HCT116 (cell line): ENCODE measurements at regions of chr12 and their contacts with region 1.

Region 1: DNA sequence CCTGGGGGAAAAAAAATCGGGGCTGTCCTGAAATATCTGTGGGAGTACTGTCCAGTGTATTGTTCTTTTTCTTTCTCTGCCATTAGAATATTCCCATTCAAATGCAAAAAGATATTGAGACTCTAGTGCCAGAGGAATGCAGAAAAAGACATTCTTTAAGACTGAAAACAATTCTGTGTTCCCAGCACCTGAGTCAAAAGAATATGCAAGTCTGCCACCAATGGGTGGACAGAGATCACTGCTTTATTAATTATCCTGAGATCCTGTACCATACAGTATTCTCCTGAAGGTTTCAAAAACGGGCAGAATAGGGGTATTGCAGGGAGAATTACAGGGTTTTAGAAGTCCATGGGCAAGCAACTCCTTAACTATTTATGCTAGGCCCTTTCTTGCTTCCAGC is 361.8 kb downstream of the C12orf50 start:
- DNase-seq: no peak
- ATAC-seq: peak; percentile 63
- H3K4me3 ChIP-seq: no peak overlapping the region
- H3K27ac ChIP-seq: no peak overlapping the region
- H3K4me1 ChIP-seq: no peaks in the 10 kb centered on the region
- H3K27me3 ChIP-seq: no peaks in the 10 kb centered on the region
- CTCF ChIP-seq: peak; percentile 22 to 34 (median 33); a peak in 4 of 6 replicates
- POLR2A ChIP-seq: no peak
- RAD21 ChIP-seq: peak; percentile 62

Region 2: GRCh38 chr12:87054226-87054625 is 613.2 kb before region 1 on chr12:
- CTCF ChIA-PET with region 1: no interaction called
- POLR2A ChIA-PET with region 1: no interaction called
- RAD21 ChIA-PET with region 1: no interaction called
- intact Hi-C with region 1: no loop called
- DNase-seq: no peak
- ATAC-seq: no peak
- H3K4me3 ChIP-seq: no peak overlapping the region
- H3K27ac ChIP-seq: no peak overlapping the region
- H3K4me1 ChIP-seq: no peaks in the 10 kb centered on the region
- H3K27me3 ChIP-seq: no peaks in the 10 kb centered on the region
- CTCF ChIP-seq: no peak
- POLR2A ChIP-seq: no peak
- RAD21 ChIP-seq: no peak

Region 3: DNA sequence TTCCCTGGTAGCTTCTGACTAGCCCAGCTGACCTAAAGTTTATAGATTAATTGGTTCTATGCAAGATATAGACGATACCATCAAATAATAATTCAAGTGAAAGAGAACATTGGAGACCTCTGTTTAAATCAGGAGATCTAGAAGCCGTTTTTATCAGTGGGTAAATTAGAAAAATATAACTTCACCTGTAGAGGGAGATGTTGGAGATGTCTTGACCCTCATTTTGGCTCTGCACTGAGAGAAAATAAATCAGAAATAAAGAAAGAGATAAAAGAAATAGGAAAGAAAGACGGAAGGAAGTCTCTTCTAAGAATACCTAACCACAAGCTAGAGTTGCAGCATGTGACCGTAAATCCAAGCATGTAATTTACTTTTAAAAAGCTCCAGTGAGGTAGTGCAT is 322.7 kb before region 1 on chr12:
- CTCF ChIA-PET with region 1: no interaction called
- POLR2A ChIA-PET with region 1: no interaction called
- RAD21 ChIA-PET with region 1: no interaction called
- intact Hi-C with region 1: loop called (anchors 10 kb)
- DNase-seq: no peak
- ATAC-seq: peak; percentile 38; the same call in 1 of the 2 replicates
- H3K4me3 ChIP-seq: no peak overlapping the region
- H3K27ac ChIP-seq: no peak overlapping the region
- H3K4me1 ChIP-seq: no peaks in the 10 kb centered on the region
- H3K27me3 ChIP-seq: no peaks in the 10 kb centered on the region
- CTCF ChIP-seq: peak; percentile 27 to 50 (median 37); a peak in 4 of 6 replicates
- POLR2A ChIP-seq: no peak
- RAD21 ChIP-seq: peak; percentile 64

Region 4: GRCh38 chr12:88141770-88142609 is 474.6 kb after region 1 on chr12 and contains the starts of genes CEP290 and TMTC3:
- CTCF ChIA-PET with region 1: no interaction called
- POLR2A ChIA-PET with region 1: no interaction called
- RAD21 ChIA-PET with region 1: no interaction called
- intact Hi-C with region 1: no loop called
- DNase-seq: peak; percentile 99
- ATAC-seq: peak; percentile 97
- H3K4me3 ChIP-seq: peak within 1 kb of the TSS; percentile 75 to 91
- H3K27ac ChIP-seq: peak within 1 kb of the TSS; percentile 56
- H3K4me1 ChIP-seq: peaks cover 3 to 9% of the 10 kb centered on the region in 2 experiments; a peak in 3 of 4 replicates
- H3K27me3 ChIP-seq: no peaks in the 10 kb centered on the region
- CTCF ChIP-seq: no peak
- POLR2A ChIP-seq: peak; percentile 53
- RAD21 ChIP-seq: no peak
- total RNA-seq, gene CEP290: 13.6 TPM
- total RNA-seq, gene TMTC3: 22.5 TPM

Region 5: DNA sequence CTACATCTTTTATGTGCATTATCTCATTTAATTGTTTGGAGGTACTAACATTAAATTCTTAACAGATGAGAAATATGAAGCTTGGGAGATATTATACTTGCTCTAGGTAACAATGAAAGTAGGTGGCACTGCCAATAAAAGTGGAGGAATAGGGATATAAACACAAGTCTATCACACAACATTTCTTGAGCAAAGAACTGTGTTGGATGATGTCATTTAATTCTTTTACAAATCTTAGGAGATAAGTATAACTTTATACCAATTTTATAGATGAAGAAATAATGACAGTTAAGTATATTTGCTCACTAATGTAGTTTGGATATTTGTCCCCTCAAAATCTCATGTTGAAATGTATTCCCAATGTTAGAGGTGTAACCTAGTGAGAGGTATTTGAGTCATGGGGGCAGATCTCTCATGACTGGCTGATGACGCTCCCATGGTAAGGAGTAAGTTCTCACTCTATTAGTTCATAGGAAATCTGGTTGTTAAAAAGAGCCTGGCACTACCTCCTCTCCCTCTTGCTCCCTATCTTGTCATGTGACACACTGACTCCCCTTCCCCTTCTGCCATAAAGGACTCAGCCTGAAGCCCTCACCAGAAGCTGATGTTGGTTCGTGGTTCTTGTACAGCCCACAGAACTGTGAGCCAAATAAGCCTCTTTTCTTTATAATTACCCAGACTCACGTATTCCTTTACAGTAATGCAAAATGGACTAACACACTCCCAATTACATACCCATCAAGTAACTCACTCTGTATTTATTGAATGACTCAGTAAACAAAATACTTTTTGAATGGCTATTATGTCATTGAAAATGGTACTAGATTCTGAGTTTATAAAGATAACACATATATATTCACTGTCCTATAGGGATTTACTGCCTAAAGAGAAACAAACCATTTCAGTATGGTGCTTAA is 1059.7 kb after region 1 on chr12:
- CTCF ChIA-PET with region 1: no interaction called
- POLR2A ChIA-PET with region 1: no interaction called
- RAD21 ChIA-PET with region 1: no interaction called
- intact Hi-C with region 1: no loop called
- DNase-seq: no peak
- ATAC-seq: no peak
- H3K4me3 ChIP-seq: no peak overlapping the region
- H3K27ac ChIP-seq: no peak overlapping the region
- H3K4me1 ChIP-seq: no peaks in the 10 kb centered on the region
- H3K27me3 ChIP-seq: no peaks in the 10 kb centered on the region
- CTCF ChIP-seq: no peak
- POLR2A ChIP-seq: no peak
- RAD21 ChIP-seq: no peak